ENCODE measurements at regions of chr10 and their contacts with region 1.

Region 1: DNA sequence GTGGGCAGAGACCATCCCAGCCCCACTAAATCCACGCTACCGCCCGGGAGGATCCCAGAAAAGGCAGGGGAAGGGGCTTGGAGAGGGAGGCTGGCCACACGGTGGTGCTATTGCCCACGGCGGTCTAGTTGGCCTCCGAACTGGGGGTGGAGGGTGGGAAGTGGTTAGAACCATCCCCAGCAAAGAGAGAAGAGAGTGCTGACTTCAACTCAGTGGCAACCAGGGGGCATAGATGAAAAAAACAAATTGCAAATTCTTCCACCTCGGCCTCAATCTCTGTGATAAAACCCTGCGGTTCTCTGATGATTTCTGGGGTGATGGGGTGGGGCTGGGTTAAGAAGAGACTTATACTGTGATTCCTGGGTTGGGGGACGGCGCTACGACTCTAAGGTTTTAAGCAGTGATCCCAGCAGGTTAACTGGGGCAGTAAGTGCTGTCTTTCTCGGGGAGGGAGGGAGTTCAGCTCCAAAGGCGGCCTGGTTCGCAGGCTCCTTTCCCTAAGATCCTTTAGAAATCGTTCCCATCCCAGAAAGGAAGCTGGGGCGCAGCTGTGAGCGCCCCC is 154.5 kb upstream of the LYZL2 start:
- DNase-seq: peak; percentile 90
- ATAC-seq: peak; percentile 86
- H3K4me3 Mint-ChIP-seq: peak overlapping the region; percentile 66
- H3K27ac Mint-ChIP-seq: peak overlapping the region; percentile 21
- H3K4me1 Mint-ChIP-seq: peaks cover 20% of the 10 kb centered on the region
- H3K27me3 Mint-ChIP-seq: peaks cover 2% of the 10 kb centered on the region

Region 2: DNA sequence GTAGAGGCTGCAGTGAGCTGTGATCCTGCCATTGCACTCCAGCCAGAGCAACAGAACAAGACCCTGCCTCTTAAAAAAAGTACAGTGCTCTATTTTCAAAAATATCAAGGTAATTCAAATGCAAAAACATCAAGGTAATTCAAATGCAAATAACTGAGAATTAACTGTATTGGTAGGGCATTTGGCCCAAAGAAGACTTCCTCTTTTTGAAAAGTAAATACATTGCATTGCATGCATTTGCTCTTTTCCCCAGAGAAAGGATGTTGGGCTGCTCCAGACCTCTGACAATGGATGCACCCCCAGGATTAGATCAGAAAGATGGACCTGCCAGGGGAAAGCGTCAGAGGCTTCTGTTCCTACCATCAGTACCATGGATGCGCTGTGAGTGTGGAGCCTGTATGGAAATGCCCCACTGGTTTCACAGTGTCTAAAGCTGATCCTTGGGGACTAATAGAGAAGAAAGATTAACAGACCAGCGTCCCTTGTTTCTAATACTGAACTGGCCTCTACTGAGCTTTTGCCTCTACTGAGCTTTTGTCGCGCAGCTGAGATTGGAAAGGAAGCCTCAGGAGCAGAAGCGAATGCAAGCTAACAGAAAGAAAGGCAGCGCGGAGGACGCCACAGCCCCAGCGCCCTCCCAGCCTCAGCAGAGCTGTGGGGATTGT is 60.9 kb before region 1 on chr10:
- CTCF ChIA-PET with region 1: interaction called, 4 read pairs
- POLR2A ChIA-PET with region 1: no interaction called
- intact Hi-C with region 1: loop called in 1 of 2 experiments (anchors 1 kb)
- DNase-seq: no peak
- ATAC-seq: no peak
- H3K4me3 Mint-ChIP-seq: no peak overlapping the region
- H3K27ac Mint-ChIP-seq: no peak overlapping the region
- H3K4me1 Mint-ChIP-seq: peaks cover 4% of the 10 kb centered on the region
- H3K27me3 Mint-ChIP-seq: no peaks in the 10 kb centered on the region

Region 3: GRCh38 chr10:31031558-31032257 is 247.7 kb after region 1 on chr10 and contains the start of gene ZNF438:
- CTCF ChIA-PET with region 1: interaction called, 7 read pairs
- POLR2A ChIA-PET with region 1: no interaction called
- intact Hi-C with region 1: loop called in 1 of 2 experiments (anchors 1 kb)
- DNase-seq: peak; percentile 96
- ATAC-seq: peak; percentile 81
- H3K4me3 Mint-ChIP-seq: peak within 1 kb of the TSS; percentile 81
- H3K27ac Mint-ChIP-seq: peak within 1 kb of the TSS; percentile 99
- H3K4me1 Mint-ChIP-seq: peaks cover 19% of the 10 kb centered on the region
- H3K27me3 Mint-ChIP-seq: no peaks in the 10 kb centered on the region
- total RNA-seq, gene ZNF438: 3.1 to 3.7 TPM

Region 4: DNA sequence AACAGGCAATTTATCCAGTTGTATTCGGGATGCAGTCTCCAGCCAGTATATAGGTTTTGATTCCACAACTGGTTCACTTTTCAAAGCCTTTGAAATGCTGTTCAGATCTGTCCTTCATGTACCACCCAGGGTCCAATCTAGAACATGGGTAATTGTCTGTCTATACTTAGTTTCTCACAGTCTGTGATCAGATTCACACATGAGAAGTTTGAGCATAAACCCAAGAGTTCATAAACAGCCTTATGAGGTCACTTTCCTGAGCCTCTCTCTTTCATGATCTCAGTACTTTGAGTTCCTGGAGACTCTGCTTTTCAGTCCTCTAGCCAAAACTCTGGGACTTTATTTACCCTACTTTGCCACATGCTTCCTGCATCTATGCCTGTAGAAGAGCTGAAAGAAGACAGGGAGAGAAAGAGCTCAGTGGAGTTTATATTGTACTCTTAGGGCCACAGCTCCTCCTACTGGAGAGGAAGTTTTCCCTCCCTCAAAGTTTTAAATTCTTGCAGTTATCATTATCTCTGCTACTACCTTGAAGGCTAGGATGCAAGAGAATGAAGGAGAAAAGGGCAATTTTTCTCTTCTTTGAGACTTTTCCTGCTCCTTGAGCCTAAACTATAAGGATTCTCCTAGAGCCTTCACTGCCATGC is 707.0 kb after region 1 on chr10:
- CTCF ChIA-PET with region 1: interaction called, 3 read pairs
- POLR2A ChIA-PET with region 1: no interaction called
- intact Hi-C with region 1: loop called in 1 of 2 experiments (anchors 1 kb)
- DNase-seq: peak; percentile 32
- ATAC-seq: peak; percentile 51
- H3K4me3 Mint-ChIP-seq: no peak overlapping the region
- H3K27ac Mint-ChIP-seq: no peak overlapping the region
- H3K4me1 Mint-ChIP-seq: peaks cover 2% of the 10 kb centered on the region
- H3K27me3 Mint-ChIP-seq: no peaks in the 10 kb centered on the region

Region 5: GRCh38 chr10:31603235-31604087 is 819.4 kb after region 1 on chr10:
- CTCF ChIA-PET with region 1: no interaction called
- POLR2A ChIA-PET with region 1: no interaction called
- intact Hi-C with region 1: loop called in 1 of 2 experiments (anchors 2 kb)
- DNase-seq: peak; percentile 94
- ATAC-seq: peak; percentile 92
- H3K4me3 Mint-ChIP-seq: peak overlapping the region; percentile 76
- H3K27ac Mint-ChIP-seq: peak overlapping the region; percentile 17
- H3K4me1 Mint-ChIP-seq: peaks cover 33% of the 10 kb centered on the region
- H3K27me3 Mint-ChIP-seq: peaks cover 2% of the 10 kb centered on the region

Region 6: GRCh38 chr10:31808258-31809218 is 1024.5 kb after region 1 on chr10:
- CTCF ChIA-PET with region 1: interaction called, 13 read pairs
- POLR2A ChIA-PET with region 1: no interaction called
- intact Hi-C with region 1: loop called (anchors 1 kb)
- DNase-seq: peak; percentile 28
- ATAC-seq: peak; percentile 51
- H3K4me3 Mint-ChIP-seq: peak overlapping the region; percentile 22
- H3K27ac Mint-ChIP-seq: peak overlapping the region; percentile 91
- H3K4me1 Mint-ChIP-seq: peaks cover 7% of the 10 kb centered on the region
- H3K27me3 Mint-ChIP-seq: no peaks in the 10 kb centered on the region